PC-3 (cell line): ENCODE measurements at regions of chr6 and their contacts with region 1.

Region 1: GRCh38 chr6:17865798-17866725 is 121.4 kb downstream of the KIF13A start:
- DNase-seq: peak; percentile 98
- ATAC-seq: peak; percentile 81
- H3K4me3 ChIP-seq: peak overlapping the region; percentile 34; the same call in 1 of the 2 replicates
- H3K27ac ChIP-seq: peak overlapping the region; percentile 96
- H3K4me1 ChIP-seq: peaks cover 68% of the 10 kb centered on the region
- H3K27me3 ChIP-seq: no peaks in the 10 kb centered on the region
- CTCF ChIP-seq: no peak

Region 2: GRCh38 chr6:17851001-17851719 is 14.9 kb before region 1 on chr6:
- CTCF ChIA-PET with region 1: interaction called, 3 read pairs
- POLR2A ChIA-PET with region 1: no interaction called
- intact Hi-C with region 1: loop called (anchors 1 kb)
- DNase-seq: peak; percentile 90
- ATAC-seq: peak; percentile 89
- H3K4me3 ChIP-seq: peak overlapping the region; percentile 32
- H3K27ac ChIP-seq: peak overlapping the region; percentile 94
- H3K4me1 ChIP-seq: peaks cover 32% of the 10 kb centered on the region
- H3K27me3 ChIP-seq: no peaks in the 10 kb centered on the region
- CTCF ChIP-seq: no peak

Region 3: GRCh38 chr6:17907406-17908229 is 41.6 kb after region 1 on chr6:
- CTCF ChIA-PET with region 1: no interaction called
- POLR2A ChIA-PET with region 1: no interaction called
- intact Hi-C with region 1: loop called (anchors 1 kb)
- DNase-seq: peak; percentile 97
- ATAC-seq: peak; percentile 94
- H3K4me3 ChIP-seq: no peak overlapping the region
- H3K27ac ChIP-seq: peak overlapping the region; percentile 88
- H3K4me1 ChIP-seq: peaks cover 43% of the 10 kb centered on the region
- H3K27me3 ChIP-seq: no peaks in the 10 kb centered on the region
- CTCF ChIP-seq: peak; percentile 56

Region 4: GRCh38 chr6:17987576-17988421 is 121.7 kb after region 1 on chr6 and contains the start of gene KIF13A:
- CTCF ChIA-PET with region 1: interaction called, 3 read pairs
- POLR2A ChIA-PET with region 1: interaction called, 9 read pairs
- intact Hi-C with region 1: loop called (anchors 2 kb)
- DNase-seq: peak; percentile 71
- ATAC-seq: peak; percentile 66
- H3K4me3 ChIP-seq: peak within 1 kb of the TSS; percentile 86
- H3K27ac ChIP-seq: peak within 1 kb of the TSS; percentile 54
- H3K4me1 ChIP-seq: peaks cover 43% of the 10 kb centered on the region
- H3K27me3 ChIP-seq: no peaks in the 10 kb centered on the region
- CTCF ChIP-seq: peak; percentile 21
- total RNA-seq, gene KIF13A: 21.3 and 27.1 TPM in 2 replicates

Region 5: DNA sequence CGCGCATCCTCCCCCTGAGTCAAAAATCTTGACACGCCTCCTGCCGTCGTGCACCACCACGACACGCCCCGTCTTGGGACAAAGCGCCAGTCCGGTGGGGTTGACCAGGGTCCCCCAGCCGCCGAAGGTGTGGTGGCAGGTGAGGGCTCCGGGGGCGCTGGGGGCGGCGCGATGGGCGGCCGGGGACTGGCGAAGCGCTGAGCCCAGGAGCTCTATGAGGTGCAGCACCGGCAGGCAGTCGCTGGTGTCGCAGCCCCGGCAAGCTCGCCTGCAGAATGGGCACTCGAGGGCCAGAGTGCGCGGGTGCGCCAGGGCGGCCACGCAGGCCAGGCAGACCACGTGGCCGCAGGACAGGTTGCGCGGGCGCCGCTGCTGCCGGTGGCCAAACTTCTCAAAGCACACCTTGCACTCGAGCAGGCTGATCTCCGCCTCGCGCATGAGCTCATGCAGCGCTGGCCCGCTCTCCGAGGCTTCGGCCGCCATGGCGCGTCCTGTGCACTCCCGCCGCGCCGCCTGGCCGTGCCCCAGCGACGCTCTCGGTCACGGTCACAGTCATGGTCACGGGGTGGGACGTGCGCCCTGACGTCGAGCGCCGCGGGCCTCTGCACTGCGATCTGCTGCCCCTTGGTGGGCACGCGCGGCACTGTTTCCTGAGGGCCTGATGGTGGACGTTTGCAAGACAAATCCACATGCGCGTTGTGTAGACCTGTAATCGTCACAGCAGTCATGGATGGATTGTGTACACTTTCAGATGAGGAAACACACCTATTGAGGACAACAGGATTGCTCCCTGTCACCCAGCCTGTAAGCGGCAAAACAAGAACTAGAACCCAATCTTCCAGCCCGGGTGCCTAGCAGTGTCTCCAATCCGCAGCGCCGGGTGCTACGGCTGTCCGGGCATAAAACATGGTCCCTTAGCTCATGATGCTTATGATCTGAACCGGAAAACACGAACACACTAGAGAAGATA is 256.3 kb after region 1 on chr6 and contains the start of gene NHLRC1:
- CTCF ChIA-PET with region 1: no interaction called
- POLR2A ChIA-PET with region 1: no interaction called
- intact Hi-C with region 1: loop called (anchors 1 kb)
- DNase-seq: peak; percentile 93
- ATAC-seq: peak; percentile 98
- H3K4me3 ChIP-seq: peak within 1 kb of the TSS; percentile 69
- H3K27ac ChIP-seq: peak within 1 kb of the TSS; percentile 52
- H3K4me1 ChIP-seq: peaks cover 14% of the 10 kb centered on the region
- H3K27me3 ChIP-seq: no peaks in the 10 kb centered on the region
- CTCF ChIP-seq: peak; percentile 92
- total RNA-seq, gene NHLRC1: 0.81 and 1.3 TPM in 2 replicates

Region 6: DNA sequence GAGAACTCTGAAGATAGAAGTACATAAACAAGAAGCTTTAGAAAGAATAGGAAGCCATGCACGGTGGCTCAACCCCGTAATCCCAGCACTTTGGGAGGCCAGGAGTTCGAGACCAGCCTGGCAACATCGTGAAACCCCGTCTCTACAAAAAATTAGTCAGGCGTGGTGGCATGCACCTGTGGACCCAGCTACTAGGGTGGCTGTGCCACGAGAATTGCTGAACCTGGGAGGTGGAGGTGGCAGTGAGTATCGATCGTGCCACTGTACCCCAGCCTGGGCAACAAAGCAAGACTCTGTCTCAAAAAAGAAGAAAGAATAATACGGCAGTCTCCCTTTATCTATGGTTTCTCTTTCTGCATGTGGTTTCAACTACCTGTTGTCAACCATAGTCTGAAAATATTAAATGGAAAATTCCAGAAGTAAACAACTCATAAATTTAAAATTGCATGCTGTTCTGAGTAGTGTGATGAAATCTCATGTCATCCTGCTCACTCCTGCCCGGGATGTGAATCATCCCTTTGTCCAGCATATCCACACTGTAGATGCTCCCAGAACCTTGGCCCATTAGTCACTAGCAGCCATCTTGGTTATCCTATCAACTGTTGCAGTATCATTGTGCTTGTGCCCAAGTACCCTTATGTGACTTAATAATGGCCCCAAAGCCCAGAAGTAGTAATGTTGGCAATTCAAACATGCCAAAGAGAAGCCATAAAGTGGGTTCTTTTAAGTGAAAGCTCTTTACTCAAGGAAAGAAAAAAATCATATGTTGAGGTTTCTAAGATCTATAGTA is 376.2 kb after region 1 on chr6:
- CTCF ChIA-PET with region 1: no interaction called
- POLR2A ChIA-PET with region 1: no interaction called
- intact Hi-C with region 1: loop called (anchors 10 kb)
- DNase-seq: peak; percentile 88
- ATAC-seq: peak; percentile 84
- H3K4me3 ChIP-seq: no peak overlapping the region
- H3K27ac ChIP-seq: peak overlapping the region; percentile 74
- H3K4me1 ChIP-seq: peaks cover 39% of the 10 kb centered on the region
- H3K27me3 ChIP-seq: no peaks in the 10 kb centered on the region
- CTCF ChIP-seq: no peak